ENCODE measurements at regions of chr12 and their contacts with region 1.

Region 1: DNA sequence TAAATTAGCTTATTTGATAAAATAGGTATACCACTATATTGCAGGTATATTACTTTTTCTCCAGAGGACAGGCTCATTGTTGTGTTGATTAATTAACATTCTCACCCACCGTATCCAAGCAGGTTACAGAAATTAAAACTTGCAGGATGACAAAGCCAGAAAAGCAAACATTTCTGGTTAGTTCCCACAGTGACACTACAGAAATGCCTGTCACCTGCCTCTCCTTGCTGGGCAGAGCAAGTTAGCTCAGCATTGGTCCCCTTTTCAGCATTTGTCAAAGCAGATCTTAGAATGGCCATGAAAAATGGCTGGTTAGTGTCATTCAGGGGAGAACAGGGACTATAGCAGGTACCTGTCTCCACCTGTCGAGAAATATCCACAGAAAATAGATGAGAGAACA is 38.8 kb downstream of the RMST start:
- DNase-seq: no peak

Region 2: DNA sequence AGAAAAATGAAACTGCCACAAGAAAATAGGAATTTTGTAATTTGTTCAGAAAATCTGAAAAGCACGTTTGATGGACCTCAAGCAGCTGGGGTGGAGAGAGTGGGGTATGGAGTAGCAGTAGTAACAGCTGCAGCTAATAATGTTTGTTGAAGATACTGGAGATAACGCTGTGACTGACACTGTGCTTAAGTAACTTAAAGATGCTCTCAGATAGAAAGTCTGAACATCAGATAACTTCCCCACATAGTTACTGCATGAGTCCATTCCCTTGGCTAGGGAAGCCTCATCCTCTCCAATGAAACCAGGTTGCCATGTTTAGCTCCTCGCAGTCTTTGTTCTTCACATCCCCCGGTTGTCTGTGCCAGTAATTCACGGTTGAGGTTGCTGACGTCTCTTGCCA is 14.0 kb before region 1 on chr12:
- intact Hi-C with region 1: no loop called
- DNase-seq: no peak

Region 3: GRCh38 chr12:97535582-97535981 is 34.2 kb after region 1 on chr12:
- intact Hi-C with region 1: loop called in 1 of 2 experiments (anchors 1 kb)
- DNase-seq: no peak

Region 4: GRCh38 chr12:98572010-98572409 is 1070.6 kb after region 1 on chr12:
- intact Hi-C with region 1: no loop called
- DNase-seq: no peak

Measured in posterior vena cava (tissue), 2 donors.